ENCODE measurements at regions of chr5 and their contacts with region 1.

Region 1: DNA sequence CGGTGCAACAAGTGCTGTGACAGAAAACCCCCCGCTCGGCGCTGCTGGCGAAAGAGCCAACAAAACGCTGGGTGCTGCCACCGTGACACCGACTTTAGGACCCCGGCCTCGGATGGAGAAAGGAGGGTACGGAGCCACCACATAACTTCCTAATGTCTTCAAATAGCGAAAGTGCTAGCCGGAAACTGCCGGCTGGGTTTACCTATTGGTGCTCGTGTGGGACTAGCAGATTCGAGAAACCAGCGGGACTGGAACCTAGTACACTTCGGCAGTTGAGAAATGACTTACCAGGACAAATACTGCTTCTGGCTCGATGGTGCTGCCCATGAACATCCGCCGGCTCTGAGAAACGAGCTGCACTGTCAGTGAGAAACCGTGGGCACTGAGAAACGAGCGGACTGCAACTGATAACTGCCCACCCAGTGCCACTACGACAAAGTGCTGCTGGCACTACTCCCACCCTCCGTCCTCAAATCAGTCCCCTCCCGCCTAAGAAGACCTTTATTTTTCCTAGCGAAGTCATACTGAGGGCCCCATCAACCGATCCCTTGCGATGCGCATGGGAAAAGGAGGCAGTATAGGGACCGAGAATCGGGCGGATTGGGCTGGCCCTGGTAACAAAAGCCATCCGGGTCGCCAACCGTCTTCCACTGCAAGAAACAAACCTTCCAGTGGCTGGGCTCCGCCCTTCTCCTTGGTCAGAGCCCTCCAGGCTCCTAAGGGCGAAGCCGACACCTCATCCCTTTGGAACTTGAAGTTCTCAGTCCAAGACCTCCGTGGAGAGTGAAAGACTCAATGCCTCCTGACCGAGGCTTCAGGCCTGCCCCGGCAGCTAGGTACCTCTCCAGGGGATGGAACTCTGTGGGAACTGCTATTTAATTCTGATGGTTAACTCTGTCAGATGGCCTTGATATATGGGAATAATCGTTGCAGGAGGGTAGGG is 27.0 kb upstream of the ANXA2R start:
- DNase-seq: peak; percentile 59 to 93
- ATAC-seq: peak; percentile 69 to 78
- H3K4me3 ChIP-seq: peak overlapping the region; percentile 57
- H3K27ac ChIP-seq: peak overlapping the region; percentile 92 to 93
- H3K4me1 ChIP-seq: peaks cover 23% of the 10 kb centered on the region
- CTCF ChIP-seq: no peak
- EP300 ChIP-seq: no peak
- POLR2A ChIP-seq: no peak; the same call in none of the 2 replicates
- RAD21 ChIP-seq: no peak

Region 2: GRCh38 chr5:43008369-43009153 is 58.5 kb before region 1 on chr5:
- CTCF ChIA-PET with region 1: interaction called, 26 read pairs
- POLR2A ChIA-PET with region 1: interaction called, 24 read pairs
- DNase-seq: peak; percentile 84 to 98
- ATAC-seq: peak; percentile 81 to 85
- H3K4me3 ChIP-seq: peak overlapping the region; percentile 56
- H3K27ac ChIP-seq: peak overlapping the region; percentile 93 to 95
- H3K4me1 ChIP-seq: peaks cover 13% of the 10 kb centered on the region
- CTCF ChIP-seq: peak; percentile 34
- EP300 ChIP-seq: no peak
- POLR2A ChIP-seq: peak; percentile 64
- RAD21 ChIP-seq: peak in 1 of 2 experiments; percentile 34; a peak in 3 of 5 replicates

Region 3: GRCh38 chr5:43019614-43020293 is 47.3 kb before region 1 on chr5:
- CTCF ChIA-PET with region 1: interaction called, 20 read pairs
- POLR2A ChIA-PET with region 1: interaction called, 10 read pairs
- DNase-seq: peak; percentile 51 to 88
- ATAC-seq: peak; percentile 68
- H3K4me3 ChIP-seq: peak overlapping the region; percentile 55
- H3K27ac ChIP-seq: peak overlapping the region; percentile 90 to 96
- H3K4me1 ChIP-seq: peaks cover 24% of the 10 kb centered on the region
- CTCF ChIP-seq: no peak
- EP300 ChIP-seq: no peak
- POLR2A ChIP-seq: no peak
- RAD21 ChIP-seq: no peak

Region 4: DNA sequence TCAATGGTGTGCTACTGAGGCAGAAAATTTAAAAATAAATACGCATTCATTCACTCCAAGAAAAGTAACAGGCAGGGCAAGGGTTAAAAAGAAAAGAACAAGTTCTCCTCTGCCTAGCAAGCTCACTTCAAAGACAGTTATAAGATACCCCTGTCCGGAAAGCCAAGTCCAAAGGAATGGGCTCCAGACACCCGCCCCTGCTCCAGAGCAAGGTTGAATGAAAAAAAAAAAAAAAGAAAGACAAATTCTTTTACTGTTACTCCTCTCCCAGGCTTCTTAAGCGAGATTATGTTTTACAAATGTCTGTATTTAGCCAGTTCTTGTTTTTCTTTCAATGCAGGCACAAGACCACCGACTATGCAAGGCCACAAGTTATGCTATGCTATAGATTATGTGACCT is 17.8 kb before region 1 on chr5:
- CTCF ChIA-PET with region 1: interaction called, 23 read pairs
- POLR2A ChIA-PET with region 1: interaction called, 3 read pairs
- DNase-seq: no peak
- ATAC-seq: no peak
- H3K4me3 ChIP-seq: no peak overlapping the region
- H3K27ac ChIP-seq: no peak overlapping the region
- H3K4me1 ChIP-seq: 0 out of 3 replicates have a peak, but pooled peaks cover 3% of the 10 kb centered on the region
- CTCF ChIP-seq: no peak
- EP300 ChIP-seq: no peak
- POLR2A ChIP-seq: no peak
- RAD21 ChIP-seq: no peak

Region 5: DNA sequence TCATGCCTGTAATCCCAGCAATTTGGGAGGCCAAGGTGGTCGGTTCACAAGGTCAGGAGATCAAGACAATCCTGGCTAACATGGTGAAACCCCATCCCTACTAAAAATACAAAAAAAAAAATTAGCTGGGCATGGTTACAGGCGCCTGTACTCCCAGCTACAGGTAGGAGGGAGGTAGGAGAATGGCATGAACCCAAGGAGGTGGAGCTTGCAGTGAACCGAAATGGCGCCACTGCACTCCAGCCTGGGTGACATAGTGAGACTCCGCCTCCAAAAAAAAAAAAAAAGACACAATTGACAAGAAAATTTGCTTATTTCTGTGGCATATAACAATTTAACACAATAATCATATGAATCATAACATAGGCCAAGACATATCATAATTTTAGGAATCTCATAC is 18.4 kb after region 1 on chr5:
- CTCF ChIA-PET with region 1: no interaction called
- POLR2A ChIA-PET with region 1: no interaction called
- DNase-seq: no peak
- ATAC-seq: no peak
- H3K4me3 ChIP-seq: no peak overlapping the region
- H3K27ac ChIP-seq: no peak overlapping the region
- H3K4me1 ChIP-seq: no peaks in the 10 kb centered on the region
- CTCF ChIP-seq: no peak
- EP300 ChIP-seq: no peak
- POLR2A ChIP-seq: no peak
- RAD21 ChIP-seq: no peak

Measured in A549 (cell line).